Ascending aorta (tissue), 2 donors: ENCODE measurements at regions of chr12 and their contacts with region 1.

Region 1: DNA sequence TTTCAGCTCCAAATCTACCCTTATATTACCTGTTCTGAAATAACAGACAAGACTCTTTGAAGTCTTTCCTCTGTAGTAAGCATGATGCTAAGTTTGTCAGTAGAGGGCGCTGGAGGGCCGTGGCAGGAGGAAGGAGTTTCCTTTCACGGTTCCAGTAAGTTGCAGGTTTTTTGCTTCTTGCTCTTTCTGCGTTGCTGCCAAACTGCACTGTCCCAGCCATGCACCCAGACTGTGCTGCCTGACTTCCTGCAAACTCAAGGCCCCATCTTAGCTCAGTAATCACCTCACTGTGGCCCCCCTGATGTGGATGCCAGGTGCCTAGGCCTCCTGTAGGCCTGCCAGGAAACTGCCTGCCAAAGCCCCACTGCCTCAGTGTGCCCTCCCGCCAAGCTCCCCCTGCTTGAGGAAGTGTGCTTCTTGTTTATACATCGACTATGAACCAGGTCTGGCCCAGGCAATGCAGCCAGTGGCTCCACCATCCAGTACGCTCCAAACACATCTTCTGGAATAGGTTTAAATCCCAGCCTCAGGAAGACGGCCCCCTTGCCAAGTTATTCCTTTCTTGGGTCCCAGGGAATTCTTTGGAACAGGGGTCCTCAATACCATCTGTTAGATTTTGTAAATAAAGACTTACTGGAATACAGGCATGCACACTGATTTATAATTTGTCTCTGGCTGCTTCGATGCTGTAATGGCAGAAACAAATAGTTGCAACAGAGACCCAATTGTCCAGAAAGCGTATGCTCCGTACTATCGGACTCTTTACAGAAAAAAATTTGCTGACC is 193.7 kb upstream of the LRIG3 start:
- DNase-seq: peak; percentile 10 to 88
- H3K4me3 ChIP-seq: no peak overlapping the region
- H3K27ac ChIP-seq: no peak overlapping the region
- H3K4me1 ChIP-seq: no peaks in the 10 kb centered on the region
- H3K27me3 ChIP-seq: no peaks in the 10 kb centered on the region
- CTCF ChIP-seq: peak; percentile 87 to 92 (median 89)

Region 2: GRCh38 chr12:58416236-58416635 is 697.8 kb before region 1 on chr12:
- intact Hi-C with region 1: loop called (anchors 10 kb)
- DNase-seq: no peak
- H3K4me3 ChIP-seq: no peak overlapping the region
- H3K27ac ChIP-seq: no peak overlapping the region
- H3K4me1 ChIP-seq: peaks cover 0 to 10% of the 10 kb centered on the region in 2 donors
- H3K27me3 ChIP-seq: no peaks in the 10 kb centered on the region
- CTCF ChIP-seq: no peak

Region 3: DNA sequence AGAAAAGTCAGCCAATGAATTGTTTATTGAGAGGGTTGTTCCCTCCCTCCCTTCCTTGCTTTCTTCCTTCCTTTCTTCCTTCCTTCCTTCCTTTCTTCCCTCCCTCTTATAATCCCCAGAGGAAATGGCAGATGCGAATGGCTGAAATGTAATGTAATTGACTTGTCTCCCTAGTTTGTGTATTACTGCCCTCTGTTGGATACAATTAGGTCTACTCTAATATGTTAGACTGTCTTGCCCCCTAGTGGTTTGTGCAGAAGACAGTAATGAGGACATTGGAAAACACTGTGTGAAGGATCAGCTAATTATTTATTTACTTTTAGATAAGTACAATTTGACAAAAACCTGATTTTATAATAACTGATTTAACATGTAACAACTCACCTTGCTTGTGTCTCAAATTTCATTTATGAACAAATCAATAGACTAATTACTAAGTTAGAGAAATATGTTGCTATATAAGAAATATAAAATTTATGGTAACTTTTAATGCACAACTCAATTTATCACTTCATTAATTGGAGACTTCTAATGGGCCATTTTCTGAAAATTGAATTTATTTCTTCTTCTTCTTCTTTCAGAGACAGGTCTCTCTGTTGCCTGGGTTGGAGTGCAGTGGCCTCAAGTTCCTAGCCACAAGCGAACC is 36.1 kb after region 1 on chr12:
- intact Hi-C with region 1: loop called (anchors 1 kb)
- DNase-seq: no peak
- H3K4me3 ChIP-seq: no peak overlapping the region
- H3K27ac ChIP-seq: no peak overlapping the region
- H3K4me1 ChIP-seq: peaks cover 0 to 8% of the 10 kb centered on the region in 2 donors
- H3K27me3 ChIP-seq: no peaks in the 10 kb centered on the region
- CTCF ChIP-seq: peak; percentile 88 to 94 (median 93)

Region 4: GRCh38 chr12:59164991-59165718 is 51.1 kb after region 1 on chr12:
- intact Hi-C with region 1: loop called (anchors 1 kb)
- DNase-seq: no peak
- H3K4me3 ChIP-seq: no peak overlapping the region
- H3K27ac ChIP-seq: no peak overlapping the region
- H3K4me1 ChIP-seq: no peaks in the 10 kb centered on the region
- H3K27me3 ChIP-seq: no peaks in the 10 kb centered on the region
- CTCF ChIP-seq: peak in 2 of 3 experiments; percentile 44 to 58

Region 5: GRCh38 chr12:59317598-59317997 is 203.6 kb after region 1 on chr12:
- intact Hi-C with region 1: no loop called
- DNase-seq: no peak
- H3K4me3 ChIP-seq: no peak overlapping the region
- H3K27ac ChIP-seq: no peak overlapping the region
- H3K4me1 ChIP-seq: no peaks in the 10 kb centered on the region
- H3K27me3 ChIP-seq: no peaks in the 10 kb centered on the region
- CTCF ChIP-seq: no peak

Region 6: GRCh38 chr12:59780605-59781135 is 666.6 kb after region 1 on chr12:
- intact Hi-C with region 1: no loop called
- DNase-seq: no peak
- H3K4me3 ChIP-seq: no peak overlapping the region
- H3K27ac ChIP-seq: no peak overlapping the region
- H3K4me1 ChIP-seq: no peaks in the 10 kb centered on the region
- H3K27me3 ChIP-seq: no peaks in the 10 kb centered on the region
- CTCF ChIP-seq: peak in 1 of 3 experiments; percentile 43